ENCODE measurements at regions of chr1 and their contacts with region 1.

Region 1: DNA sequence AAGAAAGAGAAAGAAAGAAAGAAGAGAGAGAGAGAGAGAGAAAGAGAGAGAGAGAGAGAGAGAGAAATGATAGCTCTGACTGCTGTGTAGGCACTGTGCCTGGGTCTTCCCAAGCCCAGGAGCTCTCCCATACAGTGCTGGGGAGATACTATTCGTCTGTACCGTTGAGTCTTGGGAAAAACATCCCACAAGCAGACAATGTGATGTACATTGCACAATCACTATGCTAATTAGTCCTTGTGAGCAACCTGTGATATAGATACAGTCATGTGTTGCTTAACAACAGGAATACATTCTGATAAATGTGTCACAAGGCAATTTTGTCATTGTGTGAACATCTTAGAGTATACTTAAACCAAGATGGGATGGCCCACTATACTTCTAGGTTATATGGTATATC is 381.0 kb downstream of the HHAT start:
- DNase-seq: no peak

Region 2: GRCh38 chr1:210722410-210723081 is 12.8 kb after region 1 on chr1:
- intact Hi-C with region 1: loop called in 1 of 2 experiments (anchors 2 kb)
- DNase-seq: no peak